SK-N-SH (cell line): ENCODE measurements at regions of chrX and their contacts with region 1.

Region 1: DNA sequence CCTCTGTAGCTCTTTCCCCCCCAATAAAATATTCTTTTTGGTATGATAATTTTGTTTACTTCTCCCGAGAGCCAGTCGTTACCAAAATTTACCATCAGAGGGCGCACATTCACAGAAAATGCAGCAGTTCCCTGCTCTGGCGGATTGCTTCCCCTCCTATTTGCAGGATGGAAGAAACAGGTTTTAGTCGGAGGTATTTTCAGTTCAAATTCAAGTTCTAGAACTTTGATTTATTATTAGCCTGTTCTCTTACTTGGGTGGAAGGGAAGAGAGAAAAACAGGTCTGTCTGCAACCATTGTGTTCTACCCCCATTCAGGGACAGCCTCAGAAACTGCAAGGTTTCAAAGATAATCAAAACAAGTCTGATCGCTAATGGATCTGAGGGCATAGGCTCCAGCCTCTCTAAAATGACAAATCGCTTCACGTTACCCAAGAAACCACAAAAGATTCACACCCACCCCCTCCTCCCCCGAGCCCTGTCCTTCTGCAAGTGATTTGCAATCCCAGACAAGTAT is 263.8 kb upstream of the RPS6KA3 start:
- DNase-seq: peak; percentile 41
- H3K4me3 ChIP-seq: peak overlapping the region; percentile 25 to 40; a peak in 2 of 4 replicates
- H3K27ac ChIP-seq: no peak overlapping the region
- H3K4me1 ChIP-seq: peaks cover 2 to 6% of the 10 kb centered on the region in 2 experiments; a peak in 2 of 4 replicates
- H3K27me3 ChIP-seq: no peaks in the 10 kb centered on the region; the same call in 1 of the 2 replicates
- CTCF ChIP-seq: peak; percentile 87
- EP300 ChIP-seq: no peak
- RAD21 ChIP-seq: peak; percentile 83

Region 2: DNA sequence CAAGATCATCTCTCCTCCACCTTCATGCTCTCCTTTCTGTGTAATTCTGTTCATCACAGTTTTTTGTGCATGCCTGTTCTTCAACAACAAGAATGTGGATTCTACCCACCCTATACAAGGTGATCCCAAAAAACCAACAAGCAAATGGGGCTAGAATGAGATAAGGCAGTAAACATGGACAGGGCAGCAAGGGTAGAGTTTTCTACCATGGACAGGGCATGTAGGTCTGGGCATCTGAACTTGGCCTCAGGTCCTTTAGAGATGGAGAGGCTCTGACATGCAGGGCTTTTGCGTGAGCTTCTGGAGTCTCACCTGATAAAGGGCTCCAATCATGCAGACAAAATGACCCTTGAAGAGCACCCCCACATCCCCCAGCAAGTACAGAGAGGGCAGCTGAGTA is 450.2 kb before region 1 on chrX:
- CTCF ChIA-PET with region 1: no interaction called
- POLR2A ChIA-PET with region 1: no interaction called
- DNase-seq: no peak
- H3K4me3 ChIP-seq: no peak overlapping the region
- H3K27ac ChIP-seq: no peak overlapping the region
- H3K4me1 ChIP-seq: no peaks in the 10 kb centered on the region
- H3K27me3 ChIP-seq: no peaks in the 10 kb centered on the region; the same call in none of the 2 replicates
- CTCF ChIP-seq: no peak
- EP300 ChIP-seq: no peak
- RAD21 ChIP-seq: no peak

Region 3: DNA sequence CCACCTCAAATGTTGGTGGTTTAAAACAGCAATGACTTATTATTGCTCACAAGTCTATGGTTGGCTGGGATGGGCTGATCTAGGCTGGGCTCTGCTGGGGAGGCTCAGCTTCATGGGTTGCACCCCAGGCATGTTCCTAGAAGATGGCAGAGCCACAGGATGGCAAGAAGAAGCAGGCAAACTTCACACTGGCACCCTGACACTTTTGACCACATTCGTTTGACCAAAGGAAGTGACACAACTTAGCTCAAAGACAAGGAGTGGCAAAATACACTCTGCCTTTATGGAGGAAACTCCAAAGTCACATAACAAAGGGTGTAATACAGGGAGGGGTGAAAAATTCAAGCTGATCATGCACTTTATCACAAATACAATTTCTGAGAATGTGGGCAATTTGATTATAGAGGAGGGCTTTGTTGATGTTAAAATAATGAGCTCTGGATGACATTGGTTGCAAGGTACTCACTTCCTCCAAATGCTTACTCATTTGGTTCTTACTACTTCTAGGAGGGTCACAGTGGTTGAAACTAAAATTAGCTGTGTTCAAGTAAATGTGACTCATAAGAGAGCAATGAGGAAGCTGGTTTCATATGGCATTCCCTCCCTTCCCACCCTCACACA is 14.5 kb before region 1 on chrX:
- CTCF ChIA-PET with region 1: interaction called, 69 read pairs
- POLR2A ChIA-PET with region 1: no interaction called
- DNase-seq: no peak
- H3K4me3 ChIP-seq: no peak overlapping the region
- H3K27ac ChIP-seq: peak overlapping the region in 1 of 2 experiments; percentile 74; a peak in 2 of 4 replicates
- H3K4me1 ChIP-seq: peaks cover 0 to 27% of the 10 kb centered on the region in 2 experiments; a peak in 3 of 4 replicates
- H3K27me3 ChIP-seq: no peaks in the 10 kb centered on the region
- CTCF ChIP-seq: no peak
- EP300 ChIP-seq: peak in 1 of 2 experiments; percentile 58; a peak in 1 of 4 replicates
- RAD21 ChIP-seq: no peak

Region 4: DNA sequence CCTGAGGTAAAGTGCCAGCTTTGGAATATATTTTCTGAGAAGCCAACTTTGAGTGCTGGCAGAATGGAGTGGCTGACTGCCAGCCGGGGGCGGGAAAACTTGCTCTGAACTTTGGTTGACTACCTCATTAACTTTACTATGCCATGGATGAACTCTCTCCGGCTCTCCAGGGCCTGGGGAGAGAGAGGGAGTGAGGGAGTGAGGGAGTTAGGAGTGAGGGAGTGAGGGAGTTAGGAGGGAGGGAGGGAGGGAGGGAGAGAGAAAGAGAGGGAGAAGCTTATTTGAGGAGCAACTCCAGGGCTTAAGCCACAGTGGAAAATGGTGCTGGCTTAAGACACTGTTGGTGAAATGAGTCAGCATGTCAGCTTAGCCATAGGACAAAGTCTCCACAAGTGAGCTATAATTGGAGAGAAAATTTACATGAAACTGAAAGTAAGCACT is 17.2 kb after region 1 on chrX:
- CTCF ChIA-PET with region 1: interaction called, 10 read pairs
- POLR2A ChIA-PET with region 1: no interaction called
- DNase-seq: no peak
- H3K4me3 ChIP-seq: no peak overlapping the region
- H3K27ac ChIP-seq: peak overlapping the region in 1 of 2 experiments; percentile 21; a peak in 1 of 4 replicates
- H3K4me1 ChIP-seq: no peaks in the 10 kb centered on the region
- H3K27me3 ChIP-seq: no peaks in the 10 kb centered on the region
- CTCF ChIP-seq: no peak
- EP300 ChIP-seq: no peak
- RAD21 ChIP-seq: no peak

Region 5: DNA sequence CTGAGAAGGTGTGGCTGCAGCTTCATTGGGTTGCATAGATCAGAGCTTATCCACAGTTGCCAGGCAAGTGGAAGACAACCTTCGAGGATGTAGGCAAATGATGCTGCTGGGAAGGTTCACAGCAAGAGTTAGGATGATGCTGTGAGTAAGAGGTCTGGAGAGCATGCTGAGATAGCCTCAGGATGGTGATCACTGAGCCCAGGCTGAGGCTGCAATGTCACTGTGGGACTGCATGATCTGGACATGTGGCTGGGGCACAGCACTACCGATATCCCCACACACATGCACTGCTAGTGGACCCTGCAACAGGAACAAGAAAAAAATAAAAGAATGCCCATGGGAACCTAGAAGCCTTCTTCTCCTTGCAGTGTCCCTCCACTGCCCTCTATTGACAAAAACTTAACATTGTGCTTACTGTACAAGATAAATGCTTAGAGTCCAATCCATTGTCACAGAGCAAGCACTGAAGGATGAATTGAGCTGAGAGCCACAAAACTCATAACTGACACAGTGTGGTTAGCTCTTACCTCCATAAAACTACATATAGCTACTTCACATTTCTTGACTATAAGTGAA is 949.3 kb after region 1 on chrX:
- CTCF ChIA-PET with region 1: interaction called, 47 read pairs
- POLR2A ChIA-PET with region 1: no interaction called
- DNase-seq: peak; percentile 33
- H3K4me3 ChIP-seq: no peak overlapping the region
- H3K27ac ChIP-seq: no peak overlapping the region
- H3K4me1 ChIP-seq: peaks cover 0 to 2% of the 10 kb centered on the region in 2 experiments; a peak in 1 of 4 replicates
- H3K27me3 ChIP-seq: no peaks in the 10 kb centered on the region
- CTCF ChIP-seq: peak; percentile 72
- EP300 ChIP-seq: no peak
- RAD21 ChIP-seq: peak; percentile 81

Region 6: GRCh38 chrX:21725496-21725895 is 1195.0 kb after region 1 on chrX:
- CTCF ChIA-PET with region 1: interaction called, 17 read pairs
- POLR2A ChIA-PET with region 1: no interaction called
- DNase-seq: peak; percentile 31
- H3K4me3 ChIP-seq: no peak overlapping the region; a peak in 1 of 4 replicates
- H3K27ac ChIP-seq: no peak overlapping the region
- H3K4me1 ChIP-seq: peaks cover 0 to 4% of the 10 kb centered on the region in 2 experiments; a peak in 1 of 4 replicates
- H3K27me3 ChIP-seq: no peaks in the 10 kb centered on the region; the same call in 1 of the 2 replicates
- CTCF ChIP-seq: peak; percentile 64
- EP300 ChIP-seq: no peak
- RAD21 ChIP-seq: peak; percentile 80

Region 7: GRCh38 chrX:21745756-21746155 is 1215.3 kb after region 1 on chrX:
- CTCF ChIA-PET with region 1: interaction called, 11 read pairs
- POLR2A ChIA-PET with region 1: no interaction called
- DNase-seq: peak; percentile 15
- H3K4me3 ChIP-seq: no peak overlapping the region
- H3K27ac ChIP-seq: no peak overlapping the region
- H3K4me1 ChIP-seq: peaks cover 0 to 3% of the 10 kb centered on the region in 2 experiments; a peak in 1 of 4 replicates
- H3K27me3 ChIP-seq: peaks cover 5% of the 10 kb centered on the region; the same call in 1 of the 2 replicates
- CTCF ChIP-seq: peak; percentile 78
- EP300 ChIP-seq: no peak
- RAD21 ChIP-seq: peak; percentile 61